CD4-positive, alpha-beta memory T cell (primary cell): ENCODE measurements at regions of chr17 and their contacts with region 1.

Region 1: GRCh38 chr17:74203439-74204240 is at the start of gene RPL38:
- DNase-seq: peak; percentile 92 to 96 (median 94)
- H3K4me3 ChIP-seq: peak within 1 kb of the TSS; percentile 79 to 86
- H3K4me3 Mint-ChIP-seq: peak within 1 kb of the TSS; percentile 97 to 100 (median 98)
- H3K27ac ChIP-seq: peak within 1 kb of the TSS; percentile 87
- H3K27ac Mint-ChIP-seq: peak within 1 kb of the TSS; percentile 94 to 98 (median 97)
- H3K4me1 ChIP-seq: peaks cover 55% of the 10 kb centered on the region
- H3K4me1 Mint-ChIP-seq: peaks cover 25 to 48% (median 36%) of the 10 kb centered on the region in 4 donors
- H3K27me3 ChIP-seq: peaks cover 7% of the 10 kb centered on the region
- H3K27me3 Mint-ChIP-seq: peaks cover 11 to 19% of the 10 kb centered on the region in 2 donors
- total RNA-seq, gene RPL38: 2,053 to 2,073 TPM

Region 2: DNA sequence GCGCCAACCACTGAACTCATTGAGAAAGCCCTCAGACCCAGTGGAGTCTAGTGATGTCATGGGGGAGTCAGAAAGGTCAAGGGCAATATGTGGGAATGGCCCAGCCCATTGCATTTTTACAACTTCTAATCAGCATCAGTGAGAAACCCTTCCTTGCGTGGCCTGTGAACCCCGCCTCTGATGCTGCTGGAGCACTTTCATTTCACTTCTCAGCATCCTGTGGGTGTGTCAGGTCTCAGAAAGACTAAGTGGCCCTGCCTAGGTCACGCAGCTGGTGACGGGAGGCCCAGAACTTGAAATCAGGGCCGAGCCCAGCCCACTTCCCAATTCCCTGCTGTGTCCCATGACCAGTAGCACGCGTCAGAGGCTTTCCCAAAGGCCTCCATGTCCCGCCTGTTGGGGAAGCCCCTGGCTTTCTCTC is 76.5 kb after region 1 on chr17:
- CTCF ChIA-PET with region 1: interaction called, 4 read pairs
- POLR2A ChIA-PET with region 1: interaction called, 5 read pairs
- intact Hi-C with region 1: loop called (anchors 2 kb)
- DNase-seq: peak; percentile 72 to 81 (median 75)
- H3K4me3 ChIP-seq: peak overlapping the region in 1 of 2 donors; percentile 7
- H3K4me3 Mint-ChIP-seq: peak overlapping the region; percentile 2 to 82 (median 52)
- H3K27ac ChIP-seq: peak overlapping the region; percentile 86
- H3K27ac Mint-ChIP-seq: peak overlapping the region; percentile 89 to 99 (median 98)
- H3K4me1 ChIP-seq: peaks cover 88% of the 10 kb centered on the region
- H3K4me1 Mint-ChIP-seq: peaks cover 31 to 69% (median 51%) of the 10 kb centered on the region in 4 donors
- H3K27me3 ChIP-seq: no peaks in the 10 kb centered on the region
- H3K27me3 Mint-ChIP-seq: no peaks in the 10 kb centered on the region

Region 3: DNA sequence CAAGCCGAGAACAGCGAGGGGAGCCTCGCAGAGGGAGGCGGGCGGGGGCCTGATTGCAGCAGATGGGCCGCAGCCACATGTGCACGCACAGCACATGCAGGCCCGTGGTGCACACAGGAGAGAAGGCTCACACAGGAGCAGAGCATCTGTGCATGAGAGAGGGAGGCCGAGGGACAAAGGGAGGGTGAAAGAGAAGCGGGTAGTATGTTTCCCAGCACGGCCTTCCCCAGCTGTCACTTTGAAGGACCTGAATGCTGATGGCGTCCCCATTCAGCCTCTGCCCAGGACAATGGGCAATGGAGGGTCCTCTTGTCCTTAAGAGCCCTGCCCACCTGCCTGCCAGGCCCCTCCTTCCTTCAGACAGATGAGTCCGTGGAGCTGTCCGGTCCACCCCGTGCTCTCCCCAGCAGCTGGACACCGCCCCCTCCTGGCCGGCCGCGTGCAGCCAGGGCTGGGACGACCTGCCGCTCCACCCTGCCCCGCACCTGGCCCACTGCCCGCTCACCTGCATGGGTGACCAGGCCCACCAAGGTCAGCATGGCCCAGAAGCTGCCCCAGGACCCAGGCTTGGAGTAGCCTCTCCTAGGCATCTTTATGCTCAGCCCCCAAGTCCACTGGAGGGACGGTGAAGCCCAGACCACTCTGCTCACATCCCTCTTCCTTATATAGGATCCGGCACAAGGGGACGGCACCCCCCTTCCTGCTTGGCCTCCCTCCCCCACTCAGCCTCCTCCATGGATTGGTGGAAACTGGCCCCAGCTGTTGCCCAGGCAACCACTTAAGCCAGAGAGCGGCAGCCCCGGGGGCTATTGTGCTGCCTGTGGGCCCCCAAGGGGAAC is 157.8 kb after region 1 on chr17 and contains the start of gene BTBD17:
- CTCF ChIA-PET with region 1: interaction called, 11 read pairs
- POLR2A ChIA-PET with region 1: no interaction called
- intact Hi-C with region 1: no loop called
- DNase-seq: peak in 3 of 5 donors; percentile 20 to 33 (median 21)
- H3K4me3 ChIP-seq: no peak within 1 kb of the TSS
- H3K4me3 Mint-ChIP-seq: no peak within 1 kb of the TSS
- H3K27ac ChIP-seq: no peak within 1 kb of the TSS
- H3K27ac Mint-ChIP-seq: no peak within 1 kb of the TSS
- H3K4me1 ChIP-seq: peaks cover 9% of the 10 kb centered on the region
- H3K4me1 Mint-ChIP-seq: peaks cover 2 to 13% (median 5%) of the 10 kb centered on the region in 4 donors
- H3K27me3 ChIP-seq: peaks cover 16% of the 10 kb centered on the region
- H3K27me3 Mint-ChIP-seq: peaks cover 10 to 13% of the 10 kb centered on the region in 2 donors
- total RNA-seq, gene BTBD17: not detected